ENCODE measurements at regions of chrX and their contacts with region 1.

Region 1: DNA sequence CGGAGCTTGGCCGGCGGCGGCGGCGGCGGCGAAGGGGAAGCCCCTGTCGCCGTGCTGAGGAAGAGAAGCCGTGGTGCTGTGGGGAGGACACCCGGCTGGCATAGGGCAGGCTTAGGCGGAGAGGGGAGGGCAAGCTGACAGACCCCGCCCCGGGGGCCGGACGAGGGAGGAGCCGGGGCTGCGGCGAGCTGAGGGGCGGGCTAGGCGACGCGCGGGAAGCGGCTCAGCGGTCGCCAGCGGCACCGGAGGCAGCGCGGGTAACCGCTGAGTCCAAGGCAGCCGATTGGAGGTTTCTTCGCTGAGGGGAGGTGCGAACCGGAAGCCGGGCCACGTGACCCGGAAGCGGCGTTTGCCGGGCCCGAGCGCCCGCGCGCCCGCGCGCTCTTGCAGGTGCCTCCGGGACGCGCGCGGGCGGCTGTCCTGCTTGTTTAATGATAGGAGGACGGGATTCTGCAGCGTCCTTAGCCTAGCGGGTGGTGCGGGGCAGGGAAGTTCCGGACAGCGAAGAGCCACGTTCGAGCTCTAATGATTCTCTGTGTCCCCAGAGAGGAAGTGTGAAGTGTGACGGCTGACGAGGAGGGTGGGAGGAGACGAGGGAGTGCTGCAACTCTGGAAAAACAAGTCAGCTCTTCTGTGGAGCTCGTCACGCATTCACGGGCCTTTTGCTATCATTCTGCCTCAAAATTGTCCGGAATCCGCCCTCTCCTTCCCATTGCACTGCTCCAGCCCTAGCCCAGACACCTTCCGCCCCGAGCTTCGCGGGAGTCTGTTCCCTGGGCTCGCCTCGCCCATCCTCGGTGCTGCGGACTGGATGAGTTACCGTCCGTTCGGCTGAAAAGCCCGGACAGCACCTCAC is at the start of gene AP1S2:
- DNase-seq: peak; percentile 90 to 100 (median 99)
- ATAC-seq: peak; percentile 97
- H3K4me3 ChIP-seq: peak within 1 kb of the TSS; percentile 72
- H3K4me3 Mint-ChIP-seq: peak within 1 kb of the TSS; percentile 88 to 99 (median 94)
- H3K27ac ChIP-seq: peak within 1 kb of the TSS; percentile 87
- H3K27ac Mint-ChIP-seq: peak within 1 kb of the TSS; percentile 96 to 99 (median 98)
- H3K4me1 ChIP-seq: peaks cover 0 to 4% of the 10 kb centered on the region in 2 donors
- H3K4me1 Mint-ChIP-seq: peaks cover 3 to 35% (median 20%) of the 10 kb centered on the region in 7 donors
- H3K27me3 ChIP-seq: no peaks in the 10 kb centered on the region
- H3K27me3 Mint-ChIP-seq: peaks cover 0 to 4% (median 0%) of the 10 kb centered on the region in 5 donors
- total RNA-seq, gene AP1S2: 21.2 to 75.8 (median 25.4) TPM

Region 2: DNA sequence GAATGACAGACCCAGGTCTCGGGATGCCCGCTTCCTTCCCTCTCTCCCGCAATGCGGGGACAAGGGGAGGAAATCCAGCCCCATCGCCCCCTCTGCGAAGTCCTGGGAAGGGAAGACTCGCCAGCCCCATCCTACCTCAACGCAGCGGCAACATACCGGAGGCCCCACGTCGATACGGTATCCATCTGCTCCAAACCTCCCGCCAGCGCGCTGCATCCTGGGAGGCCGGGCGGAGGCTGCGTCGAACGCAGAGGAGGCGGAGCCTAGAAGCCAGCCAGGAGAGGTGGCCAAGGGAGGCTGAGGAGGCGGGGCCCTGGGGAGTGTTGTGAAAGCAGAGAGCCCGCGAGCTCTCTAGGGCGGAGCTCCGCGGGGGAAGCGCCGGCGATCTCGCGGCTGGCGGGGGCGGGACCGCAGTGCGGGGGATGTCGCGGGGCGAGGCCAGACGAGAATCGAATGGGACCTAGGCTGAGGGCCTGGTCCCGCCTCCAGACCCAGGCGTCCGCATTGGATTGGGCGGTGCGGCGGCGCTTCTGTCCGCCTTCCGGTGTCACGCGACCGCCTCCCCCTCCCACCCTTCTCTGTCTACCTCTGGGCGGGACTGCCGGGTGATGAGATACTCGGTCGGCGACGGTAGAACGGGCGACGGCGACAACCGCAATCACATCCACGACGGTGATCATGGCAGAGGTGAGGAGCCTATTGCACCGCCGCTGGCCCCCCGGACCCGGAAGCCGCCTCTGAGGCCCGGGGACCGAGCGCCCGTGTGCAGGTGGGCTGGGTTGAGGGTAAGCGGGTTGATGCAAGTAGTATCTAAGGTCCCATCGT is 981.9 kb before region 1 on chrX and contains the starts of genes FANCB and MOSPD2:
- CTCF ChIA-PET with region 1: no interaction called
- POLR2A ChIA-PET with region 1: no interaction called
- intact Hi-C with region 1: loop called in 1 of 2 experiments (anchors 1 kb)
- DNase-seq: peak; percentile 83 to 96 (median 93)
- ATAC-seq: peak; percentile 95
- H3K4me3 ChIP-seq: peak within 1 kb of the TSS; percentile 76
- H3K4me3 Mint-ChIP-seq: peak within 1 kb of the TSS; percentile 82 to 94 (median 88)
- H3K27ac ChIP-seq: peak within 1 kb of the TSS; percentile 76
- H3K27ac Mint-ChIP-seq: peak within 1 kb of the TSS; percentile 75 to 93 (median 88)
- H3K4me1 ChIP-seq: peaks cover 4 to 9% of the 10 kb centered on the region in 2 donors
- H3K4me1 Mint-ChIP-seq: peaks cover 0 to 34% (median 14%) of the 10 kb centered on the region in 7 donors
- H3K27me3 ChIP-seq: no peaks in the 10 kb centered on the region
- H3K27me3 Mint-ChIP-seq: no peaks in the 10 kb centered on the region
- total RNA-seq, gene FANCB: 3.3 to 8.3 (median 4.0) TPM
- total RNA-seq, gene MOSPD2: 7.1 to 15.7 (median 13.4) TPM

Region 3: GRCh38 chrX:15749642-15750610 is 105.0 kb before region 1 on chrX:
- CTCF ChIA-PET with region 1: interaction called, 6 read pairs
- POLR2A ChIA-PET with region 1: interaction called, 11 read pairs
- intact Hi-C with region 1: loop called (anchors 1 to 2 kb)
- DNase-seq: peak in 7 of 9 donors; percentile 20 to 61 (median 52)
- ATAC-seq: peak; percentile 55
- H3K4me3 ChIP-seq: peak overlapping the region; percentile 43
- H3K4me3 Mint-ChIP-seq: peak overlapping the region; percentile 60 to 86 (median 77)
- H3K27ac ChIP-seq: peak overlapping the region; percentile 89
- H3K27ac Mint-ChIP-seq: peak overlapping the region; percentile 92 to 99 (median 97)
- H3K4me1 ChIP-seq: peaks cover 51 to 55% of the 10 kb centered on the region in 2 donors
- H3K4me1 Mint-ChIP-seq: peaks cover 36 to 97% (median 82%) of the 10 kb centered on the region in 7 donors
- H3K27me3 ChIP-seq: no peaks in the 10 kb centered on the region
- H3K27me3 Mint-ChIP-seq: no peaks in the 10 kb centered on the region

Region 4: GRCh38 chrX:15804563-15804962 is 50.4 kb before region 1 on chrX:
- CTCF ChIA-PET with region 1: no interaction called
- POLR2A ChIA-PET with region 1: no interaction called
- intact Hi-C with region 1: no loop called
- DNase-seq: no peak
- ATAC-seq: peak; percentile 27
- H3K4me3 ChIP-seq: no peak overlapping the region
- H3K4me3 Mint-ChIP-seq: no peak overlapping the region
- H3K27ac ChIP-seq: no peak overlapping the region
- H3K27ac Mint-ChIP-seq: peak overlapping the region in 2 of 9 donors; percentile 5 to 54
- H3K4me1 ChIP-seq: no peaks in the 10 kb centered on the region
- H3K4me1 Mint-ChIP-seq: peaks cover 0 to 8% (median 0%) of the 10 kb centered on the region in 7 donors
- H3K27me3 ChIP-seq: no peaks in the 10 kb centered on the region
- H3K27me3 Mint-ChIP-seq: no peaks in the 10 kb centered on the region

Region 5: DNA sequence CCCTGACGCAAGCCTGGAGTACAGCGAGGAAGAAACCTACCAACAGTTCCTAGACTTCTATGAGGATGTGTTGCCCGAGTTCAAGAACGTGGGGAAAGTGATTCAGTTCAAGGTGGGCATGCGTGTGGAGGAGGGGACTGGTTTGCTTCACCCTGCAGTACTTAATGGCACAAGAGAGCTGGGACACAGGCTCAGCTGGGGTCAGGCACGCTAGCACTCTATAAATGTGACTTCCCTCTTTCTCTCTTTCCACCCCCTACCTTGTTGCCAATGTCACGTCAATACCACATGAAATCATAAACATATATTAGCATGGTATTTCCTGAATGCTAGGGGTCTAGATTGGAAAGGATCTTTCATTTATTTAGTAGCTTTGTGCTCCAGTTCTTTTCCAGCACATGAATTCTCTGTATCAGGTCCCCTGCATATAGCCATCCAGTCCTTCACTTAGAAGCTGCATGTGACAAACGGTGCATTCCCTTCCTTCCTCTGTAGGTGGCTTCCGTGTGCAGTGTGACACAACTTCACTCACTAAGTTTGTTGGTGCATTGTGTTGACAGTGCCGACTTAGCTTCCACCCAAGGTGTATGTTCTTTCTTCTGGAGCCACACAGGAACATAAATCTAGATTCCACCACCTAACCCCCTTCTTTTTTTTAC is 39.0 kb before region 1 on chrX:
- CTCF ChIA-PET with region 1: no interaction called
- POLR2A ChIA-PET with region 1: interaction called, 3 read pairs
- intact Hi-C with region 1: loop called (anchors 1 kb)
- DNase-seq: peak in 5 of 9 donors; percentile 11 to 32 (median 18)
- ATAC-seq: peak; percentile 82
- H3K4me3 ChIP-seq: no peak overlapping the region
- H3K4me3 Mint-ChIP-seq: peak overlapping the region in 5 of 10 donors; percentile 13 to 63 (median 39)
- H3K27ac ChIP-seq: no peak overlapping the region
- H3K27ac Mint-ChIP-seq: peak overlapping the region; percentile 24 to 88 (median 52)
- H3K4me1 ChIP-seq: peaks cover 14 to 26% of the 10 kb centered on the region in 2 donors
- H3K4me1 Mint-ChIP-seq: peaks cover 6 to 47% (median 36%) of the 10 kb centered on the region in 7 donors
- H3K27me3 ChIP-seq: no peaks in the 10 kb centered on the region
- H3K27me3 Mint-ChIP-seq: no peaks in the 10 kb centered on the region

Region 6: DNA sequence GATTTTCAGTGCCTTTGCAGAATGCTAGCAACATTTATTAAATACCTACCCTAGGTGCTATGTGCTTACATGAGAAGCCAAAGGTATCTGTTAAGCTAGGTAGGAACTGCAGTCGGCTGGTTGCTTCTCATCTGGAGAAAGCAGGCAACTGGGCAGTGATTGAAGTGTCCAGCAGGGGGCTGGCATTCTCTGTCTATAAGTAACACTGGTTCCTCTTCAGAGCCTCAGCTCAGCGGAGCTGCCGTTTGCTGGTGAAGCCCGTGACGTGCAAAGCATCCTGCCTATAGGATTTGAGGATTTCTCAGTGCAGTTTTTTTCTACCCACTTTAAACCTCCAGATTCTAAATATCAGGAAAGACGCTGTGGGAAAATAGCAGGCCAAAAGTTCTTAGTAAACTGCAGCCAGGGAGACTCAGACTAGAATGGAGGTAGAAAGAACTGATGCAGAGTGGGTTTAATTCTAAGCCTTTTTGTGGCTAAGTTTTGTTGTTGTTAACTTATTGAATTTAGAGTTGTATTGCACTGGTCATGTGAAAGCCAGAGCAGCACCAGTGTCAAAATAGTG is 268.4 kb after region 1 on chrX and contains the start of gene GRPR:
- CTCF ChIA-PET with region 1: no interaction called
- POLR2A ChIA-PET with region 1: no interaction called
- intact Hi-C with region 1: loop called in 1 of 2 experiments (anchors 2 kb)
- DNase-seq: peak; percentile 20 to 61 (median 48)
- ATAC-seq: peak; percentile 92
- H3K4me3 ChIP-seq: no peak within 1 kb of the TSS
- H3K4me3 Mint-ChIP-seq: peak within 1 kb of the TSS in 4 of 10 donors; percentile 37 to 48 (median 41)
- H3K27ac ChIP-seq: no peak within 1 kb of the TSS
- H3K27ac Mint-ChIP-seq: peak within 1 kb of the TSS in 1 of 9 donors; percentile 10
- H3K4me1 ChIP-seq: no peaks in the 10 kb centered on the region
- H3K4me1 Mint-ChIP-seq: peaks cover 0 to 17% (median 6%) of the 10 kb centered on the region in 7 donors
- H3K27me3 ChIP-seq: no peaks in the 10 kb centered on the region
- H3K27me3 Mint-ChIP-seq: peaks cover 0 to 26% (median under 1%) of the 10 kb centered on the region in 5 donors
- total RNA-seq, gene GRPR: 0.16 to 0.51 (median 0.24) TPM in 3 of 5 experiments, not detected in the others

Region 7: GRCh38 chrX:16719334-16720084 is 864.6 kb after region 1 on chrX and contains the start of gene SYAP1:
- CTCF ChIA-PET with region 1: no interaction called
- POLR2A ChIA-PET with region 1: no interaction called
- intact Hi-C with region 1: loop called (anchors 1 to 2 kb)
- DNase-seq: peak; percentile 85 to 100 (median 96)
- ATAC-seq: peak; percentile 96
- H3K4me3 ChIP-seq: peak within 1 kb of the TSS; percentile 95
- H3K4me3 Mint-ChIP-seq: peak within 1 kb of the TSS; percentile 88 to 98 (median 94)
- H3K27ac ChIP-seq: peak within 1 kb of the TSS; percentile 99
- H3K27ac Mint-ChIP-seq: peak within 1 kb of the TSS; percentile 92 to 100 (median 99)
- H3K4me1 ChIP-seq: peaks cover 0 to 10% of the 10 kb centered on the region in 2 donors
- H3K4me1 Mint-ChIP-seq: peaks cover 2 to 63% (median 39%) of the 10 kb centered on the region in 7 donors
- H3K27me3 ChIP-seq: no peaks in the 10 kb centered on the region
- H3K27me3 Mint-ChIP-seq: no peaks in the 10 kb centered on the region
- total RNA-seq, gene SYAP1: 15.4 to 36.9 (median 15.6) TPM